ENCODE measurements at regions of chr14 and their contacts with region 1.

Region 1: DNA sequence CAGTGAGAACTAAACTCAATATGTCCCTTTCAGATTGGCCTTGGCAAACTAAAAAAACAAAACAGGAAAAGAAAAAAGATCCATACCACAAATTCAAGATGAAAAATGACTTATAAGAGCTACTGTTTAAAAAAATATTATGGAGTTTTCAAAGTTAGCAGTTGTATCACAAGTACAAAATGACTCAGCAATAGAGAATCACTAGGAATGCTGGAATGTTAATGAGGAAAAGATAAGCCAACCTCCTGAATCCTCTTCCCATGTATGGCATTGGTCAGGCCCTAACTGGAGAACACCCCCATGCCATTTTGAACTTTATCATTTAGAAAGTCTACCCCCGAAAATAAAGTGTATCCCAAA is 62.2 kb downstream of the PPP1R36 start:
- DNase-seq: peak; percentile 85
- ATAC-seq: peak; percentile 90
- H3K4me3 ChIP-seq: no peak overlapping the region
- H3K27ac ChIP-seq: peak overlapping the region; percentile 98; the same call in 1 of the 2 replicates
- H3K4me1 ChIP-seq: peaks cover 24% of the 10 kb centered on the region
- H3K27me3 ChIP-seq: no peaks in the 10 kb centered on the region
- CTCF ChIP-seq: no peak
- POLR2A ChIP-seq: no peak
- RAD21 ChIP-seq: no peak

Region 2: GRCh38 chr14:64465191-64465822 is 146.7 kb before region 1 on chr14 and contains the start of gene AKAP5:
- CTCF ChIA-PET with region 1: no interaction called
- POLR2A ChIA-PET with region 1: no interaction called
- dilution Hi-C with region 1: no loop called
- in situ Hi-C with region 1: no loop called
- intact Hi-C with region 1: no loop called
- DNase-seq: peak; percentile 11
- ATAC-seq: peak; percentile 94
- H3K4me3 ChIP-seq: peak within 1 kb of the TSS; percentile 70
- H3K27ac ChIP-seq: peak within 1 kb of the TSS; percentile 5; the same call in 1 of the 2 replicates
- H3K4me1 ChIP-seq: no peaks in the 10 kb centered on the region; the same call in 1 of the 2 replicates
- H3K27me3 ChIP-seq: no peaks in the 10 kb centered on the region
- CTCF ChIP-seq: no peak
- POLR2A ChIP-seq: no peak
- RAD21 ChIP-seq: no peak
- total RNA-seq, gene AKAP5: 0.72 and 1.4 TPM in 2 replicates

Region 3: DNA sequence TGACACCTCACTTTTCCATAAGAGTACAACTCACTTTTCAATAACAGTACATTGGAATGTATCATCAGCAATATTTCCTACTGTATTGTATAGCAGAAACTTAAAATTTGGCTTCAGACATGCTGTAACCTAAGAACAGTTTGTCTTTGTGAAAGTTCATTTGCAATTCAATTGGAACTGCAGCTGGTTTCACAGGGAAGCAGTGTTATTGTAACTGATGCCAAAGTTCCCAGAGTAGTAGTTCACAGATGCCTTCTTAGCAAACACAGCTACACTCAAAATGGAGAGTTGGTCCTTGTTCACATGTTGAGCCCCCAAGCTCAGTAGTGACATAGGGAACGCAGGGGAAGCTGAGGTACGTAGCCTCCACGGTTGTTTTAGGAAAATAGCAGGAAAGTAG is 38.9 kb before region 1 on chr14:
- CTCF ChIA-PET with region 1: no interaction called
- POLR2A ChIA-PET with region 1: no interaction called
- dilution Hi-C with region 1: no loop called
- in situ Hi-C with region 1: no loop called
- intact Hi-C with region 1: loop called (anchors 5 kb)
- DNase-seq: peak; percentile 65
- ATAC-seq: peak; percentile 61
- H3K4me3 ChIP-seq: no peak overlapping the region
- H3K27ac ChIP-seq: no peak overlapping the region
- H3K4me1 ChIP-seq: peaks cover 3% of the 10 kb centered on the region; the same call in 1 of the 2 replicates
- H3K27me3 ChIP-seq: no peaks in the 10 kb centered on the region
- CTCF ChIP-seq: no peak
- POLR2A ChIP-seq: no peak
- RAD21 ChIP-seq: no peak

Measured in IMR-90 (cell line).